Heart right ventricle (tissue), 16 donors: ENCODE measurements at regions of chr11 and their contacts with region 1.

Region 1: GRCh38 chr11:16605894-16606783 is 132.3 kb upstream of the C11orf58 start:
- DNase-seq: peak; percentile 90 to 94
- ATAC-seq: peak; percentile 51 to 80 (median 65)
- H3K4me3 ChIP-seq: peak overlapping the region; percentile 57 to 95 (median 84)
- H3K27ac ChIP-seq: peak overlapping the region; percentile 85 to 99 (median 98)
- H3K4me1 ChIP-seq: peaks cover 0 to 44% (median 14%) of the 10 kb centered on the region in 9 donors
- H3K27me3 ChIP-seq: peaks cover 0 to 100% (median 11%) of the 10 kb centered on the region in 7 donors
- CTCF ChIP-seq: peak; percentile 89 to 99 (median 97)

Region 2: GRCh38 chr11:15650105-15650938 is 955.8 kb before region 1 on chr11:
- intact Hi-C with region 1: loop called in 7 of 10 experiments (anchors 2 to 10 kb)
- DNase-seq: peak; percentile 95 to 97
- ATAC-seq: peak; percentile 99 to 100 (median 99)
- H3K4me3 ChIP-seq: peak overlapping the region in 9 of 10 donors; percentile 18 to 48 (median 42)
- H3K27ac ChIP-seq: peak overlapping the region; percentile 14 to 87 (median 80)
- H3K4me1 ChIP-seq: peaks cover 5 to 28% (median 16%) of the 10 kb centered on the region in 9 donors
- H3K27me3 ChIP-seq: peaks cover 0 to 27% (median 0%) of the 10 kb centered on the region in 7 donors
- CTCF ChIP-seq: peak; percentile 92 to 100 (median 99)

Region 3: GRCh38 chr11:15819679-15820286 is 786.4 kb before region 1 on chr11:
- intact Hi-C with region 1: loop called in 2 of 10 experiments (anchors 5 kb)
- DNase-seq: peak; percentile 79 to 84
- ATAC-seq: peak; percentile 71 to 93 (median 86)
- H3K4me3 ChIP-seq: no peak overlapping the region
- H3K27ac ChIP-seq: peak overlapping the region in 2 of 10 donors; percentile 18 to 37
- H3K4me1 ChIP-seq: peaks cover 7 to 61% (median 50%) of the 10 kb centered on the region in 9 donors
- H3K27me3 ChIP-seq: no peaks in the 10 kb centered on the region
- CTCF ChIP-seq: peak; percentile 80 to 97 (median 90)

Region 4: DNA sequence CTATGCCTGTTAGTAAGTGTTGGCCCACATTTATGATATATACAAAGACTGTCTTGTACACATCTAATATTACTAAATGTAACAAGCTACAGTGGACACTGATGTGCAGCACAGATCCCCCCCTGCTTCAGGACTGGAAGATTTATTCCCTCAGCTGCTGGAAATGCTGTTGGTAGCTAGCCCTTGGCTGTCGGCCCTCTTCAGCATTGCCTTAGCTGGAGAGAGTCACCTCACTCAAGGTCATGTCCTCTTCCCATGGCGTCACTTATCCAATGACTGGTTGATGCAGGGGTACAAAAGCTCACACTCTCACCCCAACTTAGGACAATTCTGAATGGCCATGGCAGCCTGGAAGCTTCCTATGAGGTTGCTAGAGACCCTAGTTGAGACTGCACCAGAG is 562.5 kb before region 1 on chr11:
- intact Hi-C with region 1: loop called in 2 of 10 experiments (anchors 5 to 10 kb)
- DNase-seq: peak; percentile 18 to 40
- ATAC-seq: peak; percentile 23 to 90 (median 76)
- H3K4me3 ChIP-seq: no peak overlapping the region
- H3K27ac ChIP-seq: peak overlapping the region in 1 of 10 donors; percentile 14
- H3K4me1 ChIP-seq: peaks cover 0 to 10% (median 0%) of the 10 kb centered on the region in 9 donors
- H3K27me3 ChIP-seq: no peaks in the 10 kb centered on the region
- CTCF ChIP-seq: no peak

Region 5: GRCh38 chr11:16191212-16191867 is 414.8 kb before region 1 on chr11:
- intact Hi-C with region 1: loop called in 8 of 10 experiments (anchors 2 to 10 kb)
- DNase-seq: no peak
- ATAC-seq: peak in 4 of 8 donors; percentile 20 to 39 (median 26)
- H3K4me3 ChIP-seq: no peak overlapping the region
- H3K27ac ChIP-seq: peak overlapping the region in 1 of 10 donors; percentile 4
- H3K4me1 ChIP-seq: peaks cover 0 to 41% (median 34%) of the 10 kb centered on the region in 9 donors
- H3K27me3 ChIP-seq: no peaks in the 10 kb centered on the region
- CTCF ChIP-seq: peak in 4 of 9 donors; percentile 36 to 56 (median 45)

Region 6: DNA sequence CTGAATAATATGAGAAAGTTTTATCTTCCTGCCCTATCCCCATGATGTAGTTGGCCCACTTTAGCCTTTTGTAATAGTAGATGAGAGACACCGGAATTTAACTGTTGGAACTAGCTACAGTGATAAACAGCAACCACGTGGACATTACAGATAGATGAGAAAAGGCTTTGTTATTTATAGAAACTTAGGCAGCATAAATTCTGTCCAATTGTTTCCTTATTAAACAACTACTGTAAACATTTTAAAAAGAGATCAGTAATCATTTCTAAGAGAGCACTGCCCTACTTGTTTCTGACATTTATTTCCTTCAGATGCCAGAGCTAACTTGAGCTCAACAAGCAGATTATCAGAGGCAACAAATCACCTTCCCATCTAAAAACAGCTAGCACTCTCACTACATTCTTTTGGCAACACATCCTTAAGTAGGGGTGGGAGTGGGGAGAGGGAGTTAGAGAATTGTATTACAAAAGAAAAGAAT is 312.9 kb before region 1 on chr11:
- intact Hi-C with region 1: loop called in 6 of 10 experiments (anchors 5 to 10 kb)
- DNase-seq: no peak
- ATAC-seq: peak; percentile 81 to 95 (median 88)
- H3K4me3 ChIP-seq: no peak overlapping the region
- H3K27ac ChIP-seq: peak overlapping the region; percentile 13 to 85 (median 75)
- H3K4me1 ChIP-seq: peaks cover 0 to 44% (median 29%) of the 10 kb centered on the region in 9 donors
- H3K27me3 ChIP-seq: no peaks in the 10 kb centered on the region
- CTCF ChIP-seq: no peak

Region 7: GRCh38 chr11:16468735-16469453 is 137.2 kb before region 1 on chr11:
- intact Hi-C with region 1: loop called in 1 of 10 experiments (anchors 10 kb)
- DNase-seq: no peak
- ATAC-seq: peak in 4 of 8 donors; percentile 29 to 62 (median 41)
- H3K4me3 ChIP-seq: no peak overlapping the region
- H3K27ac ChIP-seq: no peak overlapping the region
- H3K4me1 ChIP-seq: peaks cover 0 to 39% (median 19%) of the 10 kb centered on the region in 9 donors
- H3K27me3 ChIP-seq: no peaks in the 10 kb centered on the region
- CTCF ChIP-seq: no peak